Gastrocnemius medialis (tissue), 4 donors: ENCODE measurements at regions of chr4 and their contacts with region 1.

Region 1: GRCh38 chr4:99062120-99062519 is 26.5 kb downstream of the ADH5 start:
- DNase-seq: peak; percentile 19 to 56
- ATAC-seq: peak; percentile 89 to 93
- H3K4me3 ChIP-seq: no peak overlapping the region
- H3K27ac ChIP-seq: peak overlapping the region; percentile 45 to 81 (median 64)
- H3K4me1 ChIP-seq: peaks cover 7 to 29% of the 10 kb centered on the region in 2 donors
- H3K27me3 ChIP-seq: no peaks in the 10 kb centered on the region
- CTCF ChIP-seq: no peak
- POLR2A ChIP-seq: no peak

Region 2: DNA sequence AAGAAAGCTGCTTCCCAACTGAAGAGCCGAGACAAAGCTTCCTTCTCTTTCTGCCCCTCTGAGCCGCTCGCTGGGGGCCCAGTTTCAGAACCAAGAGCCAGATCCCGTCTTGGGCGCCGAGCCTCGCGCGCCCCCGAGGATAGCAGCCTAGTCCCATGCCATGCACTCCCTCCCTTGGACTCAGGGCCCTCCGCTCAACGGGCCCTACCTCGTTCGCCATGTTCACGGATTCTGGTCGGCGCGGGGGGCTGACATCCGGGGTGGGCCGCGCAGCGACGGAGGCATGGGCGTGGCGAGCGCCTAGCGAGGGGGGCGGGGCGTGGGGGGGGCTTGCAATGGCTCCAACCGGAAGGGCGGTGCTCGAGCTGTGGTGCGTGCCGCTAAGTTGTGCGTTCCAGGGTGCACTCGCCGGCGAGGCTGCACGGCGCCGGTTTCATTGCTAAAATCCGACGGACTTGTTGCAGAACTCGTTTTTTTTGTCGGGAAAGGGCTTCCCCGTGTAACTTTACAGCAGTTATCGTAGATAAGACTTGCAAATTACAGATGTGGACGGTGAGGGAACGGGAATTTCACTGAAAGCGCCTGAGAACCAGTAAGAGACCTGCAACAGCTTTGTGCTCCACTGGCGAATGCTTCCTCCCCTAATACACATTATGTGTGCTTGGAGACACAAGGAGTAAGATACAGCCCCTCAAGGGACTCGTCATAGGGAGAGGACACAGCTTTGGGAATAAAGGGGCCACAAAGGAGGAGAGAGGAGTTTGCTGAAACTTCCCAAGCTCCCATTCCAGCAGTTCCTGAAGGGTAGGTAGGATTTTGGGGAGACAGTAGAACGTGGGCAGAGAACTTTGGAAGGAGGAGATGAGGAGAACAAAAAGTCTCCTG is 26.6 kb after region 1 on chr4 and contains the start of gene ADH5:
- in situ Hi-C with region 1: no loop called
- intact Hi-C with region 1: loop called (anchors 1 kb)
- DNase-seq: peak; percentile 79 to 87
- ATAC-seq: peak; percentile 84 to 85
- H3K4me3 ChIP-seq: peak within 1 kb of the TSS; percentile 70 to 92 (median 73)
- H3K27ac ChIP-seq: peak within 1 kb of the TSS; percentile 87 to 97 (median 93)
- H3K4me1 ChIP-seq: peaks cover 0 to 23% of the 10 kb centered on the region in 2 donors
- H3K27me3 ChIP-seq: no peaks in the 10 kb centered on the region
- CTCF ChIP-seq: no peak
- POLR2A ChIP-seq: peak; percentile 86 to 87
- total RNA-seq, gene ADH5: 55.2 to 101 (median 72.6) TPM